ENCODE measurements at regions of chr15 and their contacts with region 1.

Region 1: DNA sequence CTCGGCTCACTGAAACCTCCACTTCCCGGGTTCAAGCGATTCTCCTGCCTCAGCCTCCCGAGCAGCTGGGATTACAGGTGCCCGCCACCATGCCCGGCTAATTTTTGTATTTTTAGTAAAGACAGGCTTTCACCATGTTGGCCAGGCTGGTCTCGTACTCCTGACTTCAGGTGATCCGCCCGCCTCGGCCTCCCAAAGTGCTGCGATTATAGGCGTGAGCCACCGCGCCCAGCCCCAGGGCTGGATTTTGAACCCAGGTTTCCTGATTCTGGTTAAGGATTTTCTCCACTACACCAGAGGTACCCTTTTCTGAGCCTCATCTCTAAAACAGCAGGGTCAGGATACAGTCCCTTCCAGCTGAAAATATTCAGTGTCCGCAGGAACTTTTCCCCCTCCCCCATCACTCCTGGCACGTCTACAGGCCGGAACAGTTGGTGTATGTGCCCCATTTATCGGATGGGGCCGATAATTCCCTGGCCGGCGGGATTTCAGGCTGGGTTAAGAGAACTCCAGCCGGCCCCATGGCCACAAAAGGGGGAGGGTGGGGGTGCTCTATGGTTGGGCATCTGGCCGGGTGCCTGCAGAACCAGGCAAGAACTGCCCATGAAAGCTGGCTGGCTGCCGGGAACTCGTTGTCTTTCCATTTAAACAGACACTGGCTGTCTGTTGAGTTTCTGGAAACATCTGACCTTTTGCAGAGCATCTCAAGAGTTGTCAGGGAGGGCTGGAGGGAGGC is 26.8 kb upstream of the SEMA4B start:
- DNase-seq: no peak
- ATAC-seq: peak; percentile 86
- H3K4me3 ChIP-seq: no peak overlapping the region; a peak in 1 of 4 replicates
- H3K27ac ChIP-seq: peak overlapping the region; percentile 95
- H3K4me1 ChIP-seq: peaks cover 33% of the 10 kb centered on the region
- H3K27me3 ChIP-seq: no peaks in the 10 kb centered on the region
- CTCF ChIP-seq: no peak

Region 2: DNA sequence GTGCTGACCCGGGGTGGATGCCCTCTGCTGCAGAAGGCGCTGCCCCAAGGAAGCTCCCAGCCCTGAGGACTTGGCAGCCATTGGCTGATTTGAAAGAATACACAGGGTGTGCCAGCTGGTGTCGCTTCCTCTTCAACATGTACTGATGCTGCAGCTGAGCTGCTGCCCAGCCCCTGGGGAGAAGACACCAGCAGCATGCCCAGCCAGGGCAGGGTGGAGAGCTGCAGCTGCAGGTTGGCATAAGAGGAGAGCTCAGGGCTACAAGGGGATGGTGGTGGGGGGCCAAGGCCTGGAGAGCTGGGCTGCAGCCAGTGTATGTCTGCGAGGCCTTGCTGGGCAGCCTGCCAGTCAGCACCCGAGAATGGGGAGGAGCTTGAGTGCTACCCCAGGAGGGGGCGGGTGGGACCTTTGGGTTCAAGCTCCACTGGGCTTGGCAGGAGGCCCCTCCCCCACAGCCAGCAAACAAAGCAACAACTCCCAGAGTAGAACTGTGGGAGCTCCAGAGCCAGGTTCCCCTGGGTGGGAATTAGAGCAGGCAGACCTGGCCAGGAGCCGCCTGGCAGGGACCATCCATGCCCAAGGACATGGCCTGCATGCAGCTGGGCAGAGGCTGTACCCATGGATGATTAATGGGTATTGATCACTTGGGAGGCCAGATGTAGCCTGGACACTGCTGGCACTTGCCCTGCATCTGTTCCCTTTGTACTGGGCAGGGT is 17.6 kb after region 1 on chr15:
- CTCF ChIA-PET with region 1: no interaction called
- POLR2A ChIA-PET with region 1: interaction called, 10 read pairs
- in situ Hi-C with region 1: no loop called
- intact Hi-C with region 1: no loop called
- DNase-seq: no peak
- ATAC-seq: peak; percentile 64
- H3K4me3 ChIP-seq: no peak overlapping the region
- H3K27ac ChIP-seq: peak overlapping the region; percentile 93
- H3K4me1 ChIP-seq: peaks cover 56% of the 10 kb centered on the region
- H3K27me3 ChIP-seq: no peaks in the 10 kb centered on the region
- CTCF ChIP-seq: no peak

Region 3: GRCh38 chr15:90325726-90326125 is 151.4 kb after region 1 on chr15:
- CTCF ChIA-PET with region 1: no interaction called
- POLR2A ChIA-PET with region 1: no interaction called
- in situ Hi-C with region 1: no loop called
- intact Hi-C with region 1: no loop called
- DNase-seq: no peak
- ATAC-seq: no peak
- H3K4me3 ChIP-seq: no peak overlapping the region
- H3K27ac ChIP-seq: no peak overlapping the region
- H3K4me1 ChIP-seq: peaks cover 4% of the 10 kb centered on the region; the same call in 1 of the 2 replicates
- H3K27me3 ChIP-seq: no peaks in the 10 kb centered on the region
- CTCF ChIP-seq: no peak